Activated naive CD8-positive, alpha-beta T cell treated with anti-CD3 and anti-CD28 coated beads, Interleukin-2, amount 10 ng/mL, durations not matched to agents 7 days and 5 days (primary cell): ENCODE measurements at regions of chr9 and their contacts with region 1.

Region 1: DNA sequence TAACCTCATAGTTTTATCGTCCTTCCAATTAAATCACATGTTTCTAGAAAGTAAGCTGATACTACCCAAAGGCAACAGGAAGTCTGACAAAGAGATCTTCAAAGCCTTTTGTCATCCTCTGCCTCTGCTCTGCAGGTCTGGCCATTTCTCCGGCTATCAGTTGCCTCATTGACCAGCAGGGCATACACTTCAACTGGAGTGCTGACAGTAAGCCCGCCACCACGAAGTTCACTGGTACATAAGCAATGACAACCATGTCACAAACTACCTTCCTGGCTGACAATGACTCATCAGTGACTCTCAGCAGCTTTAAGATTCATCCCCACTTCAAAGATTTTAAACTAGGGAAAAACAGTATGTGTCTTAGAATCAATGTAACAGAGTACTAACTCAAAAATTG is 20.6 kb downstream of the SPTLC1 start:
- DNase-seq: peak; percentile 37
- ATAC-seq: peak; percentile 76
- H3K4me3 Mint-ChIP-seq: peak overlapping the region; percentile 6
- H3K27ac Mint-ChIP-seq: peak overlapping the region; percentile 74
- H3K4me1 Mint-ChIP-seq: peaks cover 33% of the 10 kb centered on the region
- H3K27me3 Mint-ChIP-seq: no peaks in the 10 kb centered on the region

Region 2: DNA sequence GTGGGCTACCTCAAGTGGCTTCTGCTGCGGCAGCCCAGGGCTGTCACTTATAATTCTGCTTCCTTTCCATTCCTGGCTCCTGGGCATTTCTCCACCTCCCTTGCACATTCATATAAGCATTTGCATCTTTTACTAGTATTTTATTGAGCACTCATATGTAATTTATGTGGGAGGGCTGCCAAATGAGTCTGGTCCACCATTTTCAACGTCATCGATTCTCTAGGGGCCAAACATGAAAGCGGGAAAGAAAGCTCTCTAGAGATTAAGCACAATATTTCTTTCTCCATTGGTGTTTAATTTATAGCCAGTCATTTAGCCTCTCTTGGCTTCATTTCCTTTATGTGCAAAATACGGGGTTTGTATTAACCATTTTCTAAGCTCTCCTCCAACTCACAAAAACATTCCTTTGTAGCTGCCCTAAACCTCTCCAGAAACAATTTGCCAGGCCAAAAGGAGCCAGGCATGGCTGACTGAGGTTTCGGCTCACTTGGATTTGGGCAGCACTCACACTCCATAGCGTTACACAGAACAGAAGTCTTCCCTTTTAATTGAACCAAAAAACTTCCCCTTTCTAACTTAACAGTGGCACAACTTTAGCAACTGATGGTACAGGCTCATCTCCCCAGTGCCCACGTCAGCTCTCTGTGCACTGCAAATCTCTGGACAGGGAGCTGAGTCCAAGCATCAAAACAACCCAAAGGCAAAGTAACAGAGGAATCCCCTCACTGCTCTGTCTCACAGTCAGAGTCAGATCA is 328.2 kb before region 1 on chr9:
- POLR2A ChIA-PET with region 1: no interaction called
- DNase-seq: no peak
- ATAC-seq: no peak
- H3K4me3 Mint-ChIP-seq: no peak overlapping the region
- H3K27ac Mint-ChIP-seq: no peak overlapping the region
- H3K4me1 Mint-ChIP-seq: no peaks in the 10 kb centered on the region
- H3K27me3 Mint-ChIP-seq: peaks cover 28% of the 10 kb centered on the region

Region 3: GRCh38 chr9:92048924-92049625 is 45.6 kb before region 1 on chr9:
- POLR2A ChIA-PET with region 1: no interaction called
- DNase-seq: no peak
- ATAC-seq: no peak
- H3K4me3 Mint-ChIP-seq: no peak overlapping the region
- H3K27ac Mint-ChIP-seq: no peak overlapping the region
- H3K4me1 Mint-ChIP-seq: peaks cover 3% of the 10 kb centered on the region
- H3K27me3 Mint-ChIP-seq: no peaks in the 10 kb centered on the region

Region 4: DNA sequence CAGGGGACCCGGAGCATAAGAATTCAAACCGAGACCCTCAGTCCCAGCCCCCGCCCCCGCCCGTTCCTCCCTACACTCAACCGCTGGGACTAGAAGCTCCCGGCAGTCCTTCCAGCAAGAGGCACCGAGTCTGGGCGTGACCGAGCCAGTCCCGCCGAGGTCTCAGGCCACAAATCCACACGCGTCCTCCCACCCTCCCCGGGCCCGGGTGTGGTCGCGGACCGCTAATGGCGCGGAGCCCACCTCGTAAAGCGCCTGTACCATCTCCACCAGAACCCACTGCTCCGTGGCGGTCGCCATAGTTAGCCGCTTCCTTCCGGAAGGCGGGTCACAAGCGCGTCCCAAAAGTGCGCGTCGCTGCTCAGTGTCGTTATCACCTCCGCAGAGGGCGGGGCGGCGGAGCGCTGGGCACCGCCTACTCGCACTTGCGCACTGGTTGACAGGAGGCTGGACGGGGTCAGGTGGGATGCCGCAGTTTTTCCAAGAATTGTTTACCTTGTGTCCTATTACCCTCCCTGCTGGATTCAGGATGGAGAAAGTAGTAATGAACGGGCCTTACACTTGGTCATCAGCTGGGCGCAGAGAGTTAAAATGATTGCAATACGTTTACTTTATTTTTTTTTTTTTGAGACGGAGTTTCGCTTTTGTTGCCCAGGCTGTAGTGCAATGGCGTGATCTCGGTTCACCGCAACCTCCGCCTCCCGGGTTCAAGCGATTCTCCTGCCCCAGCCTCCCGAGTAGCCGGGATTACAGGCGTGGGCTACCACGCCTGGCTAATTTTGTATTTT is 20.6 kb after region 1 on chr9 and contains the start of gene SPTLC1:
- POLR2A ChIA-PET with region 1: interaction called, 11 read pairs
- DNase-seq: peak; percentile 97
- ATAC-seq: peak; percentile 98
- H3K4me3 Mint-ChIP-seq: peak within 1 kb of the TSS; percentile 95
- H3K27ac Mint-ChIP-seq: peak within 1 kb of the TSS; percentile 98
- H3K4me1 Mint-ChIP-seq: peaks cover 21% of the 10 kb centered on the region
- H3K27me3 Mint-ChIP-seq: peaks cover 3% of the 10 kb centered on the region
- total RNA-seq, gene SPTLC1: 50.2 to 51.4 TPM